ENCODE measurements at regions of chr12 and their contacts with region 1.

Region 1: DNA sequence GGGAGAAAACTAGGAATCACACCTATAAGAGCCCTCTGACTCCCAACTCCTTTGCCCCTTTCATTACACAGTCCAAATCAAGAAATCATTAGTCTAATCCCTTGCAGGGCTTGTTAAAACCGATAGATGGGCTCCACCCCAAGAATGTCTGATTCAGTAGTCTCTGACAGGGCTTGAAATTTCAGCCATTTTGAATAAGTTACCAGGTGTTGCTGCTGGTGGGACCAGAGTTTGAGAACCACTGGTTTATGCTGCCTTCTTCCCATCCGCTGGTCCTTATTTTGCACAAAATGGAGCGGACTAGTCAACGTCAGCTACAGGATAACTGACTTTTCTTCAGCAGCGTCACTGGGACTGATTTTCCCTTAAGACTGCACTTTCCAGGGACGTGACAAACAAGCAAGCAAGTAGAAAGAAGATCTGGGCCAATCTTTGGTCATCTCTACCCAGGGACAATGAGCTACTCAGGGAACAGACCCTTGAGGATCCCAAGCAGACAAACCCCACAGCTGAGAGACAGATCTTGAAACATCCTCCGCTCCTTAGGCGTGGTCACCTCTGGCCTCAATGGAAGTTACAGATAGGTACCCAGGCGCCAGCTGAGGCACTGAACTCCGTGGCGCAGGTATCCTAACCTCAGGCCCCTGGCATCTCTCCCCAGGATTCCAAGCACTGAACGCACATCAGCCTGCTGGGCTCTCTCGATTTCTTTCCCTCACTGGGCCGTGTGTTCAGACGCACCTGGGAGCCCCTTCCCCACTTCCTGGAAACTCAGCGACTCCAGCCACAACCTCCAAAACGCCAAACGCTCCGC is 900 bp downstream of the KCTD10 start:
- DNase-seq: no peak
- H3K4me3 ChIP-seq: peak overlapping the region; percentile 93 to 96 (median 96)
- H3K27ac ChIP-seq: peak overlapping the region; percentile 98 to 99
- H3K4me1 ChIP-seq: peaks cover 4 to 7% of the 10 kb centered on the region in 2 donors
- H3K27me3 ChIP-seq: no peaks in the 10 kb centered on the region
- CTCF ChIP-seq: no peak
- POLR2A ChIP-seq: no peak

Region 2: GRCh38 chr12:109239179-109239578 is 237.0 kb before region 1 on chr12:
- intact Hi-C with region 1: no loop called
- DNase-seq: no peak
- H3K4me3 ChIP-seq: no peak overlapping the region
- H3K27ac ChIP-seq: no peak overlapping the region
- H3K4me1 ChIP-seq: no peaks in the 10 kb centered on the region
- H3K27me3 ChIP-seq: no peaks in the 10 kb centered on the region
- CTCF ChIP-seq: no peak
- POLR2A ChIP-seq: no peak

Region 3: GRCh38 chr12:109432841-109433304 is 43.3 kb before region 1 on chr12:
- intact Hi-C with region 1: loop called (anchors 2 kb)
- DNase-seq: peak; percentile 85 to 89
- H3K4me3 ChIP-seq: no peak overlapping the region
- H3K27ac ChIP-seq: peak overlapping the region in 1 of 2 donors; percentile 22
- H3K4me1 ChIP-seq: no peaks in the 10 kb centered on the region
- H3K27me3 ChIP-seq: no peaks in the 10 kb centered on the region
- CTCF ChIP-seq: peak; percentile 64 to 83 (median 74)
- POLR2A ChIP-seq: no peak

Region 4: DNA sequence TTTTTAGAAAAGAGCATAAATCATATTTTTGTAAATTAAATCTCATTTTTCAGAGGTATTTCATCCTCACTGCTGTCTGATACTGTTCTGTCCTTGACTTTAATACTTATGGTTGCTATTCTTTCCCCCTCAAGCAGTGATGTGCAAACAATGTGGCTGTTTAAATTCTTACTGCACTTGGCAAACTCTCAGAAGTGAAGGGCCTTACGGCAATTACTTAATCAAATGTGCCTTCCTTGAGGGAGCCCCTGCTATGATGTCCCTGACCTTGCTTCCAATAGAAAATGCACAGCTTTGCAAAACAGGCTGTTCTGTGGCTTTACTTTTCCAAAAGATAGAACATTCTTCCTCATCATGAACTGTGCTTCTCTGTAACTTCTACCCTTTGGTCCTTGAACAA is 36.4 kb after region 1 on chr12:
- intact Hi-C with region 1: no loop called
- DNase-seq: no peak
- H3K4me3 ChIP-seq: no peak overlapping the region
- H3K27ac ChIP-seq: no peak overlapping the region
- H3K4me1 ChIP-seq: no peaks in the 10 kb centered on the region
- H3K27me3 ChIP-seq: no peaks in the 10 kb centered on the region
- CTCF ChIP-seq: no peak
- POLR2A ChIP-seq: no peak

Measured in breast epithelium (tissue), 4 donors.